Gastrocnemius medialis (tissue), 4 donors: ENCODE measurements at regions of chrX and their contacts with region 1.

Region 1: GRCh38 chrX:47193475-47194193 is at the start of gene UBA1:
- DNase-seq: peak; percentile 84 to 92
- ATAC-seq: peak; percentile 79 to 84
- H3K4me3 ChIP-seq: peak within 1 kb of the TSS; percentile 69 to 97 (median 89)
- H3K27ac ChIP-seq: peak within 1 kb of the TSS; percentile 98 to 100 (median 98)
- H3K4me1 ChIP-seq: peaks cover 29 to 46% of the 10 kb centered on the region in 2 donors
- H3K27me3 ChIP-seq: no peaks in the 10 kb centered on the region
- CTCF ChIP-seq: peak; percentile 58 to 96 (median 91)
- POLR2A ChIP-seq: peak; percentile 84 to 86
- total RNA-seq, gene UBA1: 113 to 181 (median 162) TPM

Region 2: GRCh38 chrX:47012131-47012530 is 181.5 kb before region 1 on chrX:
- in situ Hi-C with region 1: no loop called
- intact Hi-C with region 1: no loop called
- DNase-seq: no peak
- ATAC-seq: no peak
- H3K4me3 ChIP-seq: no peak overlapping the region
- H3K27ac ChIP-seq: no peak overlapping the region
- H3K4me1 ChIP-seq: no peaks in the 10 kb centered on the region
- H3K27me3 ChIP-seq: no peaks in the 10 kb centered on the region
- CTCF ChIP-seq: no peak
- POLR2A ChIP-seq: no peak

Region 3: DNA sequence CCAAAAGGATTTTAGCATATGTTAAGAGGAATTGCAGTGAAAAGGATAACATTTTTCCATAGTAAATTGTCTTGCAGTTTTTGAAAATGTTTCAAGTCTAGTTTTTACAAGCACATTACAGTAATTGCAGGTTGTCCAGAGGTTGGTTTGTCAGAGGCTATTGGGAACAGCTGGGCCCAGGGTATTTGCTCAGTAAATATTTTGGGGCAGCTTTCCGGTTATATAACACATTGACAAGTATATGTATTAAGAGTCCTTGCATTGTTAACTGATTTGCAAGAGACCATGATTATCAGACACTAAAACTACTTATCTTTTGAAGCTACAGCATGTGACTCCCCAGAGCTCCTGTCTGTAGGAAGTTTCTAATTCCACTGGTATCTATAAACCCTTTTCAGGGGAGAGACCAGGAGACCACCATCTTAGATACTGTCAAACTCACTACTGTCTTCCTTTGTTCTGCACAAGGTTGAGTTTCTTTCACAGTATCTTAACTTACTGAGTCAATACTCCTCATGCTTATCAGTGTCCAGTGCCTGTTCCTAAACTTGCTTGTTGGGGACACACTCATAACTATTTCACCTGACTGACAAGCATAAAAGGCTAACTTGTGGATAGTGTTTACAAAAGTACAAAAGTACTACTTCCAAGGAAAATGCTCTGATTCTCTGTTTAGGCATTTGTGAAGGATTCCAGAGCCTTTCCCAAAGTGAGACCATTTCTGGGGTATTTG is 134.3 kb before region 1 on chrX:
- in situ Hi-C with region 1: no loop called
- intact Hi-C with region 1: no loop called
- DNase-seq: no peak
- ATAC-seq: no peak
- H3K4me3 ChIP-seq: no peak overlapping the region
- H3K27ac ChIP-seq: no peak overlapping the region
- H3K4me1 ChIP-seq: no peaks in the 10 kb centered on the region
- H3K27me3 ChIP-seq: no peaks in the 10 kb centered on the region
- CTCF ChIP-seq: no peak
- POLR2A ChIP-seq: no peak

Region 4: DNA sequence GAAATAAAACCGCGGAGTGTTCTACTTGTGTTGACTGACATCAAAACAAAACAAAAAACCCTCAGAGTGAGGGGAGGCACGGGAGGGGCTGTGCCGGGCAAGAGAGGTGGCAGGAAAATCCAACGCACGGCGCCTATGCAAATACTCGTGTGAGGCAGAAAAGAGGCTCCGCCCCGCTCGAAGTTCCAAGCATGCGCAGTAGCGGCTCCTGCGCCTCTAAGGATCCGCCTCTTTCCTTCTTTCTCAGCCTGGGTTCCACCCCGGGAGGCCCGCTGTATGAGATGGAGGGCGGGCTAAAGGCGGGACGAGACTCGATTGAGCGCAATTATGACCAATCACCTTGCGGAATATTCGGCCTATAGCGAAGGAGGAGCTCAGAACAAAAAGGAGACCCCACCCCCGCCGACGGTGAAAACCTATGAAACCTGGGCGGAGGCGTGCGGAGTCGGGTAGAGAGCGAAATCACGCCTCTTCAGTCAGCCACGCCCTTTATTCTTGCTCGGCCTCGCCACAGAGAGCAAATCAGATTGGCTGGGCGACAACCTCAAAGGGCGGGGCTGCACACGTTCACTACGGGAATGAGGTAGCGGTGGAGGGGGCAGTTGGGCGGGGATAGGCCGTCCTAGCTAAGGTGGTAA is 24.1 kb after region 1 on chrX:
- in situ Hi-C with region 1: no loop called
- intact Hi-C with region 1: loop called (anchors 1 kb)
- DNase-seq: peak; percentile 94 to 98
- ATAC-seq: peak; percentile 82 to 88
- H3K4me3 ChIP-seq: peak overlapping the region; percentile 67 to 75 (median 72)
- H3K27ac ChIP-seq: peak overlapping the region; percentile 92 to 99 (median 96)
- H3K4me1 ChIP-seq: peaks cover 13 to 20% of the 10 kb centered on the region in 2 donors
- H3K27me3 ChIP-seq: no peaks in the 10 kb centered on the region
- CTCF ChIP-seq: no peak
- POLR2A ChIP-seq: no peak

Region 5: DNA sequence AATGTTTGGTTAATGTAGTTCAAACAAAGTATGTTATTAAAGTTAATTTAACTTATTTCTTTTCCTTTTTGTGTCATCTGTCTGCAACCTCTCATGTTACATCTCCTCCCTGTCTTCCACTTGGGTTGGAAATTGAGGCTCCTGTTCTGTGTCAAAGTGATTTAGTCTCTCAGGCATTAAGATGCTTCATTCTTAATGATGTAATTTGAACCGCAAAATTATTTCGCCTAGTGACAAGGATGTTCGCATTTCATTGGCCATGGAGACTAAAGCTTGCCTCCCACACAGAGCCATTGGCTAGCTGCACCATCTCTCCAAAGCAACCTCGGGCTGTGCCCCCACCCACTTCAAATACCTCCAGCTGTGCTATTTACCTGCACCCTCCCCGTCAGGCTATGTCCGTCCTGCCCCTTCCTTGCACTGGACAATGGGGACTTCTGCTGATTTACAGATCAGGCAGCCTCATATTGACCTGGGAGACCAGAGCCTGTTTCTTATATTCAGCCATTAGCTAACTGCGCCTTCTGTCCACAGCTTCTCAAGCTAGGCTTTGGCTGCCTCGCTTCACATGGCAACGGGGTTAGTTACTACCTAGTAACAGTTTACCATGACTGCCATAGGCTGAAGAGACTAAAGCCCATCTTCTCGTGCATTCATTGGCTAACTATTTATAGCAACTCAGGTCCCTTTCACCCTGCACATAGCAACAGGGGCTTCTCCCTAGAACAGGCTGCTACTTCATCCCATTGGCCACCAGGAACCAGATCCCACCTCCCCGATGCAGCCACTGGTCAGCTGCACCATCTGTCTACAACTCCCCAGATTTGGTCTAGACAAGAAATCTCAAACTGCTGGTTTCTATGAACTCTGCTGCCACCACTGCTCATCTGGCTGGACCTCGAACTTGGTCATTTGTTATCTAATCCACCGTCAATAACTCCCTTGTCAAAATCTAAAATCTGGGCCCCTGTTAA is 168.2 kb after region 1 on chrX:
- in situ Hi-C with region 1: loop called in 1 of 4 experiments (anchors 25 kb)
- intact Hi-C with region 1: loop called (anchors 5 kb)
- DNase-seq: peak; percentile 47 to 68
- ATAC-seq: peak; percentile 92
- H3K4me3 ChIP-seq: peak overlapping the region; percentile 32 to 52 (median 41)
- H3K27ac ChIP-seq: peak overlapping the region; percentile 29 to 67 (median 54)
- H3K4me1 ChIP-seq: no peaks in the 10 kb centered on the region
- H3K27me3 ChIP-seq: no peaks in the 10 kb centered on the region
- CTCF ChIP-seq: no peak
- POLR2A ChIP-seq: no peak

Region 6: GRCh38 chrX:47384502-47384901 is 190.9 kb after region 1 on chrX:
- in situ Hi-C with region 1: loop called in 2 of 4 experiments (anchors 10 kb)
- intact Hi-C with region 1: loop called (anchors 1 kb)
- DNase-seq: peak; percentile 9 to 29
- ATAC-seq: peak in 1 of 2 donors; percentile 61
- H3K4me3 ChIP-seq: no peak overlapping the region
- H3K27ac ChIP-seq: no peak overlapping the region
- H3K4me1 ChIP-seq: no peaks in the 10 kb centered on the region
- H3K27me3 ChIP-seq: no peaks in the 10 kb centered on the region
- CTCF ChIP-seq: peak; percentile 25 to 78 (median 55)
- POLR2A ChIP-seq: no peak

Region 7: GRCh38 chrX:47523297-47523696 is 329.7 kb after region 1 on chrX:
- in situ Hi-C with region 1: loop called in 2 of 4 experiments (anchors 10 kb)
- intact Hi-C with region 1: loop called (anchors 1 kb)
- DNase-seq: peak; percentile 50 to 70
- ATAC-seq: peak; percentile 85 to 96
- H3K4me3 ChIP-seq: peak overlapping the region; percentile 54 to 64 (median 60)
- H3K27ac ChIP-seq: peak overlapping the region in 2 of 4 donors; percentile 26 to 31
- H3K4me1 ChIP-seq: no peaks in the 10 kb centered on the region
- H3K27me3 ChIP-seq: no peaks in the 10 kb centered on the region
- CTCF ChIP-seq: peak; percentile 63 to 88 (median 85)
- POLR2A ChIP-seq: no peak

Region 8: DNA sequence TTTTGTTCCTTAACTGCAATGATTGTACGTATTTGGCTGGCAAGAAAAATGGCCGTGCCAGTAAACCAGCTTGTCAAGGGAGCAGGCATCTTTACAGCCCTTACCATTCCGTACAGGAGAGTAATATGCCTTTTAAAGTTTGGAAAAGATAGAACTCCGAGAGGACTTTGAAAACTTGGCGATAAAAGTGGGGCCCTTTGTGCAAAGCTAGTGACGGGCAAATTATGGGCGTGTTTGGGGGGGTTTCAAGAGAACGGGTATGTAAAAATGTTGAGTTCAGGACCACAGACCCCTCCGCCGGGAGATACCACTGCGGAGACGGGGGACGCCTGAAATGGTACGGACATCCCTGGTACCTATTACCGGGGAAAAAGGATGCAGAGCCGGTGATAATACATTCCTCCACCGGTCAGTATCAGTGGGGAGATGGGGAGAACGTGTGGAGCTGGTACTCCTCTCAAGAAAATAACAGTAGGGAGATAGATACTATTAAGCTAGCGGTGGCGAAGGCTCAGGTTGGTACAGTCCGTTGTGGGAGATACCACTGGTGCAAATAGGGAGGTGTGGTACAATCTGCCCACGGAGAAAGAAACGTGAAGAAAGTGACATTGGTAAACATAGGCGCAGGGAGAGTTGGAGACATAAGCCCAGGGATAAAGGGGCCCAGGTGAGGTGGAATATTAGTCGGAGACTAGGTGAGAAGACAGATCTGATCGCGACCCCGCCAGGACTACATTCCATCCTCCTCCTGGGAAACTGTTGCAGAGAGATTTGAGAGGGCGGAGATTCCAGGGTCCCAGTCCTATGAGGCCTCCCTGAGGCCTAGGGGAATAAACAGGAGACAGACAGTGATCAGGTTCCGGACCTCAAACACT is 827.6 kb after region 1 on chrX:
- in situ Hi-C with region 1: no loop called
- intact Hi-C with region 1: loop called (anchors 5 kb)
- DNase-seq: peak; percentile 32 to 60
- ATAC-seq: peak; percentile 90
- H3K4me3 ChIP-seq: peak overlapping the region; percentile 61 to 68 (median 64)
- H3K27ac ChIP-seq: peak overlapping the region; percentile 82 to 91 (median 86)
- H3K4me1 ChIP-seq: peaks cover 0 to 4% of the 10 kb centered on the region in 2 donors
- H3K27me3 ChIP-seq: no peaks in the 10 kb centered on the region
- CTCF ChIP-seq: no peak
- POLR2A ChIP-seq: no peak